ENCODE measurements at regions of chr14 and their contacts with region 1.

Region 1: GRCh38 chr14:31263485-31264133 is 56.0 kb upstream of the HECTD1 start:
- DNase-seq: peak; percentile 98
- H3K4me3 ChIP-seq: no peak overlapping the region
- H3K27ac ChIP-seq: peak overlapping the region; percentile 78
- H3K4me1 ChIP-seq: peaks cover 41% of the 10 kb centered on the region
- H3K27me3 ChIP-seq: no peaks in the 10 kb centered on the region
- CTCF ChIP-seq: no peak

Region 2: DNA sequence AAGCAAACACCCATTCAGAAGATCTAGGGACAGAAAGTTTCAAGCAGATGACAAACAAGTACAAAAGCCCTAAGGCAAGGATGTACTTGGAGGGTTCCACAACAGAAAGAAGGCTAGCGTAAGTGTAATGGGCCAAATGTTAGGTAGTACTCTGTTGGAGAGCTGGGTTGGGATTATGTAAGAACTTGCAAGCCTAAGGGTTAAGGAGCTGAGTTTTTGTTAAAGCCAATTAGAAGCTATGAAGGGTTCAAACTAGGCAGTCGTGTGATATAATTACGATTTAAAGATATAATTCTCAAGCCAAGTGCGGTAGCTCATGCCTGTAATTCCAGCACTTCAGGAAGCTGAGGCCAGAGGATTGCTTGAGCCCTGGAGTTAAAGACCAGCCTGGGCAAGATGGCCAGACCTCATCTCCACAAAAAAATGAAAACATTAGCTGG is 97.3 kb before region 1 on chr14:
- CTCF ChIA-PET with region 1: no interaction called
- dilution Hi-C with region 1: no loop called
- in situ Hi-C with region 1: no loop called
- intact Hi-C with region 1: loop called (anchors 5 kb)
- DNase-seq: peak; percentile 8
- H3K4me3 ChIP-seq: no peak overlapping the region
- H3K27ac ChIP-seq: peak overlapping the region; percentile 73
- H3K4me1 ChIP-seq: peaks cover 27% of the 10 kb centered on the region
- H3K27me3 ChIP-seq: no peaks in the 10 kb centered on the region
- CTCF ChIP-seq: no peak

Region 3: GRCh38 chr14:31216359-31216758 is 47.2 kb before region 1 on chr14:
- CTCF ChIA-PET with region 1: no interaction called
- dilution Hi-C with region 1: no loop called
- in situ Hi-C with region 1: no loop called
- intact Hi-C with region 1: no loop called
- DNase-seq: no peak
- H3K4me3 ChIP-seq: no peak overlapping the region
- H3K27ac ChIP-seq: no peak overlapping the region
- H3K4me1 ChIP-seq: no peaks in the 10 kb centered on the region
- H3K27me3 ChIP-seq: no peaks in the 10 kb centered on the region
- CTCF ChIP-seq: no peak

Region 4: DNA sequence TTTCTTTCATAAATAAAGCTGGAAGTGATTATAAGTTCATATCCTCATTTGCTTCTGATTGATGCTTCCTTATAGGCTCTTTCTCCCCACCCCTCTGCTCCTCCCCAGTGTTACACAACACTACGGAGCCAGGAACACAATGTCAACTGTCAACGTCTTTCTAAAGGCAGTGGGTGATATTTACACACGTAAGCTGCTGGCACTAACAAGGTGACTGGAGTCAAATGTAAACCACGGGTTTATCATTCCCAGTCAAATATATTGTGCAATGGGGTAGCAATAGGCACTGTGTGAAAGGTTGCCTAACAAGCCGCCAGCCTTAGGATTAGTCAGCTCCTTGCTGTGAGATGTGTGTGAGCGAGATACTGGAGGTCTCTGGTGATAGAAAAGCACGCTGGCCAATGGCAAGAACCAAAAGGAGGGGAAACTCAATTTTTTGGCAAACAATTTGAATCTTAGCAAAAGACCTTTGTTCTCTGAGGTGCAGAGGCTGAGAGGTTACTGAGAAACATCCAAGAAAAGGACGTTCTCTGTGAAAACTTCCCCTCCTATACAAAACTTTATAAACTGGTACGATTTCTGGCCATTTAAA is 33.9 kb before region 1 on chr14:
- CTCF ChIA-PET with region 1: no interaction called
- dilution Hi-C with region 1: no loop called
- in situ Hi-C with region 1: no loop called
- intact Hi-C with region 1: loop called (anchors 1 kb)
- DNase-seq: peak; percentile 97
- H3K4me3 ChIP-seq: no peak overlapping the region
- H3K27ac ChIP-seq: peak overlapping the region; percentile 45
- H3K4me1 ChIP-seq: peaks cover 18% of the 10 kb centered on the region
- H3K27me3 ChIP-seq: no peaks in the 10 kb centered on the region
- CTCF ChIP-seq: no peak

Region 5: DNA sequence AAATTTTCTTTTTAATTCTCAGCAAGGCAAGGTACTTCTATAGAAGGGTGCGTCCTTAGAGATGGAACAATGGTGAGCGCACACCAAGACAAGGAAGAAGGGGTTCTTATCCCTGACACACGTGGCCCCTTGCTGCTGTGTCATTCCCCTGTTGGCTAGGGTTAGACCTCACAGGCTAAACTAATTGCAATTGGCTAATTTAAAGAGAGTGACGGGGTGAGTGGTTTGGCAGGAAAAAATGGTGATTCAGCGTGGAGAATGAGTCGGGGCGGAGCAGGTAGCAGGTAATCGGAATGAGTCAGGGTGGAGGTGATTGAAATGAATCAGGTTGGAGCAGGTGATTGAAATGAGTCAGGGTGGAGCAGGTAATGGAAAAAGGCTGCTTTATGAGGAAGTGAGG is 19.7 kb before region 1 on chr14:
- CTCF ChIA-PET with region 1: no interaction called
- dilution Hi-C with region 1: no loop called
- in situ Hi-C with region 1: no loop called
- intact Hi-C with region 1: loop called (anchors 2 kb)
- DNase-seq: peak; percentile 97
- H3K4me3 ChIP-seq: no peak overlapping the region
- H3K27ac ChIP-seq: peak overlapping the region; percentile 84
- H3K4me1 ChIP-seq: peaks cover 21% of the 10 kb centered on the region
- H3K27me3 ChIP-seq: no peaks in the 10 kb centered on the region
- CTCF ChIP-seq: no peak

Region 6: GRCh38 chr14:31456841-31457664 is 193.4 kb after region 1 on chr14 and contains the start of gene DTD2:
- CTCF ChIA-PET with region 1: no interaction called
- dilution Hi-C with region 1: no loop called
- in situ Hi-C with region 1: no loop called
- intact Hi-C with region 1: no loop called
- DNase-seq: peak; percentile 93
- H3K4me3 ChIP-seq: peak within 1 kb of the TSS; percentile 60 to 77 (median 73)
- H3K27ac ChIP-seq: peak within 1 kb of the TSS; percentile 81
- H3K4me1 ChIP-seq: peaks cover 9% of the 10 kb centered on the region
- H3K27me3 ChIP-seq: no peaks in the 10 kb centered on the region
- CTCF ChIP-seq: no peak
- total RNA-seq, gene DTD2: 21.4 to 59.5 TPM

Measured in mammary epithelial cell (primary cell).